ENCODE measurements at regions of chr17 and their contacts with region 1.

Region 1: DNA sequence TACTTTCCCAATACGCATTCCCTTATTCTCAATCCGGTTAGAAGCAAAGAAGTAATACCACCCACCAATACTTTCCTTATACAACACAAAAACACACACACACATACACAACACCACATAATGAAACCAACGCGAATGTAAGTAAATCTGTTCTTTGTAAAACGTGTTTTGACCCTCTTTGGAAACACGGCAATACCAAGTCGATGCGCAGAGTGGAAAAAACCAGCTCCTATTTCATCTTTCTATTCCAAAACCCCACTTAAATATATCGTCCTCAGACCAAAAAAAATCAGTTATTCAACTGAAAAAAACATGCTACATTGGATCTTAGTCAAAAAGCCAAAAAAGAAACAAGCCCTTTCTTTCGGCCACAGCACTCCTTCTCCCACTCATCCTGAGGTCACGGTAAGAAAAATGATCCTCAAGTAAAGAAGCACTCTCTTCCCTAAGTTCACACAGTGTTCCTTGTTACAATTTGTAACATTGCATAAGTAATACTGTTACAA is 31.0 kb upstream of the ARL4D start:
- DNase-seq: peak in 4 of 9 donors; percentile 31 to 80 (median 70)
- ATAC-seq: peak; percentile 72
- H3K4me3 ChIP-seq: peak overlapping the region; percentile 75
- H3K4me3 Mint-ChIP-seq: peak overlapping the region; percentile 85 to 99 (median 92)
- H3K27ac ChIP-seq: peak overlapping the region; percentile 93
- H3K27ac Mint-ChIP-seq: peak overlapping the region; percentile 99 to 100 (median 100)
- H3K4me1 ChIP-seq: peaks cover 8 to 19% of the 10 kb centered on the region in 2 donors
- H3K4me1 Mint-ChIP-seq: peaks cover 31 to 65% (median 59%) of the 10 kb centered on the region in 7 donors
- H3K27me3 ChIP-seq: no peaks in the 10 kb centered on the region
- H3K27me3 Mint-ChIP-seq: no peaks in the 10 kb centered on the region

Region 2: DNA sequence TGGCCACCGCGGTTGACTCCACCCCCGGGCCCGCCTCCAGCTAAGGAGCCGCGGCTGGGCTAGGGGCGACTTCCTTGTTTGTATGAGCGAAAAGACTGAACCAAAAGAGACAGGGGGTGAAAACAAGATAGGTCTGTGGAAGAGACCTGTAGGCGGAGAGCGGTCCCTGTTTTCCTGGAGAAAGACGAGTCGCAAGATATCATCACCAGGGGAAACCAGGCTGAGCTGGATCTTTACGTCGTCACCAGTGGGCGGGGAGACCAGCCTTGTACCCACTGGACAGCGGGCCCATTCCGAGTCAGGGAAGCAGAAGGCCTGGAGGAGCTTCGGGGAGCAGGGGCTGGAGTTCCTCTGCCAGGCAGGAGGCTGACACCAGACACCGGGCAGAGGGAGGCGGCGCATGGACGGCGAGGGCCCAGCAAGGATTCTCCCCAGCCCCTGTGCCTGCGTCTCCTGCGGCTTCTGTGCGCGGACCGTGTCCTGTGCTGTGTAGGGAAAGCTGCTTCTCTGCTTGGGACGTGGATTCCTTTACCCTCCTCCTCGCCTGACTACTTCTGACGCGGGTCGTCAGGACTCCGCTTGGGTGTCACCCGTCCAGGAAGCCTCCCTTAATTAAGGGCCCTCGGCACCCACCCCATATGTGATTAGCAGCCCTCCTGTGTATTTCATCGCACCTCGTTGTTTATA is 20.7 kb after region 1 on chr17:
- CTCF ChIA-PET with region 1: interaction called, 8 read pairs
- POLR2A ChIA-PET with region 1: interaction called, 795 read pairs
- intact Hi-C with region 1: loop called (anchors 1 kb)
- DNase-seq: peak; percentile 92 to 98 (median 95)
- ATAC-seq: peak; percentile 84
- H3K4me3 ChIP-seq: peak overlapping the region; percentile 94
- H3K4me3 Mint-ChIP-seq: peak overlapping the region; percentile 91 to 99 (median 96)
- H3K27ac ChIP-seq: peak overlapping the region; percentile 95
- H3K27ac Mint-ChIP-seq: peak overlapping the region; percentile 95 to 100 (median 98)
- H3K4me1 ChIP-seq: peaks cover 4 to 15% of the 10 kb centered on the region in 2 donors
- H3K4me1 Mint-ChIP-seq: peaks cover 16 to 39% (median 31%) of the 10 kb centered on the region in 7 donors
- H3K27me3 ChIP-seq: no peaks in the 10 kb centered on the region
- H3K27me3 Mint-ChIP-seq: no peaks in the 10 kb centered on the region

Region 3: DNA sequence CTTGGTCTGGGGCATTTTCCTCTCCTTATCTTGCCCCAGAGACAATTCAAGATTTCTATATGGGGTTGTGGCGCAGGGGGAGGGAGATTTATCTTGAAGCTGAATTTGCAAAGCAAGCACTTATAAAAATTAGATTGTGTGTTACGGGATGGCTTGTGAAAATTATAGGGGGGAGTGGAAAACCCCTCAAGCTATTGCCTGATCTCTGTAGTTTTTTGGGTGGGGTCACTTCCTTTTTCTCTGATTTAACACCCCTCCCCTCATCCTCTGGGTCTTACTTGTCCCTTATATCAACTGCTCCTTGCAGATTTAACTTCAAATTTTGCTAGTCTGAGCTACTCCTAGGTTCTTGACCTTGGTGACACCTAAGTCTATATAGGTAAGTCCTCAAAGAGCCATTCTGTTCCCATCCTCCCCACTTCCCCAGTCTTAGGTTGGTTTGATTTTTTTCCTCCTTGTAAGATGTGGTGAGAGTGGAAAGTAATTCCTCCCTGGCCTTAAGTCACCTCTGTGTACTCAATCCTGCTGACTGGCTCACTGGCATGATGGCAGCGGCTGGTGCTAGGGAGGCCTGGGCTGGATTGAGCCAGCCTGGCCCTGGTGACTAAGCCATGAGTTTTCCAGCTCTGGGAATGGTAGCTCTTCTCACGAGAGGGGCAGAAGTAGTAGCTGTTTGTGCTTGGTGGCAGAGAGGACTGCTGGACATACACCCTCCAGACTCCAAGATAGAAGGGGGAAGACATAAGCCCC is 33.3 kb after region 1 on chr17:
- CTCF ChIA-PET with region 1: interaction called, 4 read pairs
- POLR2A ChIA-PET with region 1: interaction called, 795 read pairs
- intact Hi-C with region 1: no loop called
- DNase-seq: no peak
- ATAC-seq: no peak
- H3K4me3 ChIP-seq: no peak overlapping the region
- H3K4me3 Mint-ChIP-seq: peak overlapping the region; percentile 49 to 95 (median 67)
- H3K27ac ChIP-seq: peak overlapping the region; percentile 26
- H3K27ac Mint-ChIP-seq: peak overlapping the region in 6 of 9 donors; percentile 11 to 87 (median 28)
- H3K4me1 ChIP-seq: peaks cover 0 to 9% of the 10 kb centered on the region in 2 donors
- H3K4me1 Mint-ChIP-seq: peaks cover 5 to 40% (median 37%) of the 10 kb centered on the region in 7 donors
- H3K27me3 ChIP-seq: no peaks in the 10 kb centered on the region
- H3K27me3 Mint-ChIP-seq: no peaks in the 10 kb centered on the region

Region 4: DNA sequence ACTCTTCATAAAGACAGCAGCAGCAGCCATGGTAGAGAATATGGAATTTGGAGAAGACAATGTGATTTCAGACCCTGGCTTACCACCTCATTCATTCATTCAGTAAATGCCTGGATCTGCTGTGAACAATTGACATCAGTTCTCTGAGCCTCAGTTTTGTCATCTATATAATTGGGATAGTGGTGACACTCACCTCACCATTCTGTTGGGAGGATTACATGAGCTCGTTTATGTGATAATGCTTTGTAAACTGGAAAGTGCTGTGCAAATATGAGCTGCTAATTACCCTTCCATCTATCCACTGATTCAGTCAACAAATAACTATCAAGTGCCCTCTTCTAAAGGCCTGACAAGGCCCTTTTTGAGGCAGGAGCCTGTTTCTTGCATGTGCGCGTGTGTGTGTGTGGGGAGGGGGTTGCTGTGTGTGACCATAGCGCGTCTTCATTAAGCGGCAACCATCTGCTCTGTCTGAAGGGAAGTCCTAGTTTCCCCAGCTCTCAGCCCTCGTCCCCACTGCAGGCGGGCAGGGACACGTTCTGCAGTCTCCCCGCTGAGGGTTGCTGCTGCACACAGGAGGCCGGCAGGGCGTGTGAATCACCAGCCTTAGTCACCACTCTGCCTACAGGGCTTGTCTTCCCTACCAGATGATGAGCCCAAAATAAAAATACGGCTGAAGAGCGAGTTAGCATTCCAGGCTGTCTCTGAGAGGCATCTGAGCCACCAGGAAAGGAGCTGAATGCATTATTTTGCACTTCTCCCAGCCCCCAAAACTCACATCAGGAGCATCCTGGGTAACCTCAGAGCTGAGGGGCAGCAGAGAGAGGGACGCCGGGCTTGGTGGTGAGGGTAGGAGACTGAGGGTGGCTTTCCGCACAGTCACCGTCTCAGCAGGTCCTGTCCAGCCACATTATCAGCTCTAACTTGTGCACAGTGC is 50.9 kb after region 1 on chr17:
- CTCF ChIA-PET with region 1: no interaction called
- POLR2A ChIA-PET with region 1: no interaction called
- intact Hi-C with region 1: no loop called
- DNase-seq: no peak
- ATAC-seq: peak; percentile 26
- H3K4me3 ChIP-seq: no peak overlapping the region
- H3K4me3 Mint-ChIP-seq: no peak overlapping the region
- H3K27ac ChIP-seq: no peak overlapping the region
- H3K27ac Mint-ChIP-seq: no peak overlapping the region
- H3K4me1 ChIP-seq: no peaks in the 10 kb centered on the region
- H3K4me1 Mint-ChIP-seq: peaks cover 0 to 6% (median 0%) of the 10 kb centered on the region in 7 donors
- H3K27me3 ChIP-seq: no peaks in the 10 kb centered on the region
- H3K27me3 Mint-ChIP-seq: peaks cover 5 to 43% (median 14%) of the 10 kb centered on the region in 5 donors

Region 5: DNA sequence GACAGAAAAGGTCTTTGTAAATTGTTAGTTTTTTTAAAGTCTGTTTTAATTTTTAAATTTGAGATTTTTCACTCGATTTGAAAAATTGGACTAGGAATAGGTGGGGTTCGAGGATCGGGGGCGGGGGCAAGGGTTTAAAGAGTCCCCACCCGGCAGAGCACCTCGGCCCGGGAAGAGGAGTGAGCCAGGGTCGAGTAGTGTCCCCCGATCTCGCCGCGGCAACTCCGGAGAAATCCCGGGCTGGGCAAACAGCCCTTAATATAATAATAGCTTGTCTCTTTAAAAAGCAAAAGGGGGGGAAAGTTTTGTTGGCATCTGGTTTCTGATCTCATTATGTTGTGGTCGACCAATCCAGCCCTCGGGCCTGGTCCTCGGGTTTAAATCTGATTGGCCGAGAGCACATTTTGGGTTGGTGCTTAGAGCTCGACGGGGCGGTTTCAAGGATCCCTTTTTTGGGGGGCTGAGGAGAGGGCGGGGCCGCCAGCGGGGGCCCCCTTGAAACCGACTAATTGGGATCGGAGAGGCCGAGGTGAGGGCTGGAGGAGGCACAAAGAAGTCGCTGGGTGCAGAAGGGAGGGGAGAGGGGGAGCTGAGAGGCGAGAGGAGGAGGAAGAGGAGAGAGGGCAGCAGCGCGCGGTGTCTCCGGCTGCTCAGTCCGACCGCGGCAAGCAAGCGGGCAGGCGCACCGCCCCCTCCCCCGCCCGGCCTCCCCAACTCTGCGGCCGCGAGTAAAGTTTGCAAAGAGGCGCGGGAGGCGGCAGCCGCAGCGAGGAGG is 1189.2 kb after region 1 on chr17 and contains the start of gene FZD2:
- CTCF ChIA-PET with region 1: no interaction called
- POLR2A ChIA-PET with region 1: no interaction called
- intact Hi-C with region 1: no loop called
- DNase-seq: peak in 6 of 9 donors; percentile 5 to 41 (median 18)
- ATAC-seq: peak; percentile 83
- H3K4me3 ChIP-seq: peak within 1 kb of the TSS; percentile 70
- H3K4me3 Mint-ChIP-seq: peak within 1 kb of the TSS; percentile 88 to 97 (median 92)
- H3K27ac ChIP-seq: no peak within 1 kb of the TSS
- H3K27ac Mint-ChIP-seq: peak within 1 kb of the TSS in 4 of 9 donors; percentile 42 to 62 (median 58)
- H3K4me1 ChIP-seq: peaks cover 3 to 11% of the 10 kb centered on the region in 2 donors
- H3K4me1 Mint-ChIP-seq: peaks cover 18 to 33% (median 27%) of the 10 kb centered on the region in 7 donors
- H3K27me3 ChIP-seq: peaks cover 0 to 11% of the 10 kb centered on the region in 2 donors
- H3K27me3 Mint-ChIP-seq: peaks cover 69 to 86% (median 70%) of the 10 kb centered on the region in 5 donors
- total RNA-seq, gene FZD2: 0.16 to 1.7 (median 0.19) TPM in 3 of 5 experiments, not detected in the others

Measured in naive thymus-derived CD4-positive, alpha-beta T cell (primary cell).